Dorsolateral prefrontal cortex (tissue), 120 donors: ENCODE measurements at regions of chr7 and their contacts with region 1.

Region 1: GRCh38 chr7:80453699-80454340 is 58.0 kb downstream of the GNAT3 start:
- DNase-seq: no peak
- H3K4me3 ChIP-seq: no peak overlapping the region
- H3K27ac ChIP-seq: no peak overlapping the region
- H3K27me3 ChIP-seq: peaks cover 0 to 3% (median 0%) of the 10 kb centered on the region in 45 donors
- CTCF ChIP-seq: peak; percentile 20 to 83 (median 58)

Region 2: DNA sequence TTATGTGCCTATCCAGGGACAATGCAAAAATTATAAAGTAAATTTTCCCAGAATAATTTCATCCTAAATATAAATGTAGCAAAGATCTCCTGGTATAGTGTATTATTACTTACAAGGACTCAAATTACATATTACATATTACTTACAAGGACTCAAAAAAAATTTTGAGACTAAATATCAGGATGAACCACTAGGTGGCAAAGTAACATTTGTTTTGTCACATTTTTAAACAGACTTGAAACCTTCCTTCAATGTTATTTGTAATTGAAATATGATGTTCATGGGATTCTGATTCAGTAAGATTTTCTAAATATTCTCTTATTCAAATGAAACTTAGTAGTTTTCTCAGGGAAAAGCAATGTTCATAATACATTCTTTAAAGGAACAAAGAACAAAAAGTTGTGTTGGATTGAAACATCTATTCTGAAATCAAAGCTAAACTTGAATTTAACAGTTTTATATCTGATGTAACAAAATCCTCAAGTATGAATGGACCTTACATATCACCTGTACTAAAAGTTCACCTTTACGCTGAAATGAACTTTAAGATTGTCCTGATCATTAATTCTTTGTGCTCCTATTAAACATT is 393.5 kb before region 1 on chr7:
- intact Hi-C with region 1: loop called (anchors 5 to 10 kb)
- DNase-seq: no peak
- H3K4me3 ChIP-seq: no peak overlapping the region
- H3K27ac ChIP-seq: no peak overlapping the region
- H3K27me3 ChIP-seq: no peaks in the 10 kb centered on the region
- CTCF ChIP-seq: peak; percentile 58 to 95 (median 78)

Region 3: DNA sequence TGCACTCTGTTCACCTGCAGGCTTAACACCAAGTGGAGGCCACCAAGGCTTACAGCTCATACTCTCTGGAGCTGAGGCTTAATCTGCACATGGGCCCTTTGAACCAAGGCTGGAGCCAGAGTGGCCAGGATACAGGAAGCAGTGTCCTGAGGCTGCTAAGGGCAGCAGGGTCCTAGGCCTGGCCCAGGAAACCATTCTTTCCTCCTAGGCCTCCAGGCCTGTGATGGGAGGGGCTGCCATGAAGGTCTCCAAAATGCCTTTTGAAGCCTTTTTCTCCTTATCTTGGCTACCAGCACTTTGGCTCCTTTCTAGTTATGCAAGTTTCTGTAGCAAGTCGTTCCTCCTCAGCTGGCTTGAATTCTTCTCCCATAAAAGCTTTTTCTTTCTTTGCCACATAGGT is 387.2 kb before region 1 on chr7:
- intact Hi-C with region 1: loop called (anchors 5 to 10 kb)
- DNase-seq: no peak
- H3K4me3 ChIP-seq: no peak overlapping the region
- H3K27ac ChIP-seq: no peak overlapping the region
- H3K27me3 ChIP-seq: no peaks in the 10 kb centered on the region
- CTCF ChIP-seq: no peak

Region 4: DNA sequence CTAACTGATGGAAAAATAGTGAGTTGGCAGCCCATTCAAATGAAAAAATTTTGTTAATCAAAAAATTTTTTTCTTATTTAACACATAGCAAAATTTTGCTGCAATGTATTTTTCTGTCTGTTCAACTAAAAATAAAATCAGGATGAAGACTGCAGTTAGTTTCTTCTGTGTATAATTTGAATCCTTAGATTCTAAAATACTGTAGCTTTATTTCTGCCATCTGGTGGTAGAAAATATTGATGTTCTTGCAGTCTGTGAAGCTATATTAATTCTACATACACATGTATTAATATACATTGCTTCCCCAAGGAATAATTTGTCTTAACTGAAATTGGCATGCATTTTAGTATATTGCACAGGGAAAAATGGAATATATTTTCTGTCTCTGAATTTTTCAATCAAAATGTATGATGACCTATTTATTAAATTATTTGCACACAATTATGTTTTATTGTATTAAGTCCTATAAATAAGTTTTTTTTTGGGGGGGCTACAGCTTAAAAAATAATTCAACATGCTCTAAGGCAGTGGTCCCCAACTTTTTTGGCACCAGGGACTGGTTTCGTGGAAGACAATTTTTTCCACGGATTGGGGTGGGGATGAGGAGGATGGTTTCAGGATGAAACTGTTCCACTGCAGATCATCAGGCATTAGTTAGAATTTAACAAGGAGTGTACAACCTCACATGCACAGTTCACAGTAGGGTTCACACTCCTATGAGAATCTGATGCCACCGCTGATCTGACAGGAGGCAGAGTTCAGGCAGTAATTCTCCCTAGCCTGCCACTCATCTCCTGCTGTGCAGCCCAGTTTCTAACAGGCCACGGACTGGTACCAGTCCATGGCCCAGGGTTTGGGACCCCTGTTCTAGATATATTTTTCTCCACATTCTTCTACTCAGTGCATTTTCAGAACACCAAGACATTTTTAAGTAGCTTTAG is 61.3 kb before region 1 on chr7:
- intact Hi-C with region 1: no loop called
- DNase-seq: no peak
- H3K4me3 ChIP-seq: no peak overlapping the region
- H3K27ac ChIP-seq: peak overlapping the region in 44 of 59 donors; percentile 1 to 86 (median 56)
- H3K27me3 ChIP-seq: no peaks in the 10 kb centered on the region
- CTCF ChIP-seq: peak; percentile 53 to 86 (median 76)